ENCODE measurements at regions of chr15 and their contacts with region 1.

Region 1: GRCh38 chr15:91249591-91249990 is 149.5 kb downstream of the SV2B start:
- DNase-seq: no peak
- H3K4me3 ChIP-seq: no peak overlapping the region
- H3K27ac ChIP-seq: no peak overlapping the region
- H3K4me1 ChIP-seq: peaks cover 0 to 15% (median 8%) of the 10 kb centered on the region in 4 experiments
- H3K27me3 ChIP-seq: no peaks in the 10 kb centered on the region

Region 2: DNA sequence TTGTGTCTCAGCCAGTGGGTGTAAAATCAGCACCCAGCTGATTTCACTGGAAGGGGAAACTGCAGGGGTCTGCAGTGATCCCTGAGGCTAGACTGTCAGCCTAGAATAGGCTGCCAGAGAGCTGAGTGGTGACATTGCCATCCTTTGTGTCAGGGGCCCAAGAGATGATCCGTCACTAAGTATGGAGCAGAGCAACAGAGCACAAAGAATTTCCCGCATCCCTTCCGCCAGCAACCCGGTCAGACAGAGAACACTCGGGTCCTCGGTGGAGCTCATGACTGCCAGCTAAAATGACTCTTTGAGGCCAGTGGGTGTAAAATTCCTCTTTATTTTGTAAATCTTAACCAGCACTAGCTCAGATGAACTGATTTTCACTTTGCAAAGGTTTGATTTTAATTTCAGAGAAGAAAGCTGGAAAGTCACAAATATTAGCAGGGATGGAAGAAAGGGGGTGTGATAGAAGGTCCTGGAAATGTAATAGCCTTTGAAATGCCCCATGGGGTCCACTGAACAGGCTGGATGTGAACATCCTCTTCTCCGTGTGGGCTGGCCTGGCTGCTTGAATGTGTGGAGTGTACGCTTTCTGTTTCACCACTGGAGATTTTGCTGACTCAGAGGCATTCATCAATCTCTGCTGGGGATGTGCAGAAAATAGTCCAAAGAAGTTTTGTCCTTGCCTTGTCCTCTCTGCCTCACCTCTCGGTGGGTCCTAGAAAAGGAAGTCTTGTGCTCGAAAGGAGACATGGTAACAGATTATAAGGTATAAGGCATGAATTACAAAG is 10.8 kb before region 1 on chr15:
- CTCF ChIA-PET with region 1: interaction called, 30 read pairs
- POLR2A ChIA-PET with region 1: no interaction called
- DNase-seq: peak in 2 of 3 donors; percentile 34 to 37
- H3K4me3 ChIP-seq: no peak overlapping the region
- H3K27ac ChIP-seq: no peak overlapping the region
- H3K4me1 ChIP-seq: no peaks in the 10 kb centered on the region
- H3K27me3 ChIP-seq: peaks cover 0 to 26% (median 2%) of the 10 kb centered on the region in 5 experiments

Measured in common myeloid progenitor, CD34-positive (primary cell).